Activated naive CD4-positive, alpha-beta T cell treated with anti-CD3 and anti-CD28 coated beads, Interleukin-2, amount 10 ng/mL, durations not matched to agents 7 days and 5 days (primary cell): ENCODE measurements at regions of chr5 and their contacts with region 1.

Region 1: GRCh38 chr5:38441453-38442246 is 114.8 kb downstream of the LIFR start:
- DNase-seq: peak; percentile 89
- H3K4me3 Mint-ChIP-seq: no peak overlapping the region
- H3K27ac Mint-ChIP-seq: no peak overlapping the region
- H3K4me1 Mint-ChIP-seq: no peaks in the 10 kb centered on the region
- H3K27me3 Mint-ChIP-seq: peaks cover 66% of the 10 kb centered on the region

Region 2: DNA sequence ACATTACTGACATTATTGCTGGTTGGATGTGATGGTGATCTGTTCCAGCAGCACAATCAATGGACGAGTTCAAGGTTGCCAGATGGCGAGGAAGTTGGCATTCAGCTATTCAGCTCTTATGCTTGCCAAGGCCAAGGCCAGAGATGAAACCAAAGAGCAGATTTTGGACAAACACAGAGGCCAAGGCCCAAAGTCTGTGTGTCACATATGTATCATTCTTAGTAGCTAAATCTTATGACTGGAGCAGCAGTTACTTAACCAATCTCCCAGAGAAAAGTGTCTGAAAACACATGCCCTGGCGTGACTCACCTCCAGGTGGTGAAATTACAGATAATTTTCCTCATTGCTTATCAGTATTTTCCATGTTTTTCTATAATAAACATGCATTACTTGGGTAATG is 372.3 kb before region 1 on chr5:
- CTCF ChIA-PET with region 1: no interaction called
- DNase-seq: no peak
- H3K4me3 Mint-ChIP-seq: no peak overlapping the region
- H3K27ac Mint-ChIP-seq: no peak overlapping the region
- H3K4me1 Mint-ChIP-seq: no peaks in the 10 kb centered on the region
- H3K27me3 Mint-ChIP-seq: no peaks in the 10 kb centered on the region

Region 3: GRCh38 chr5:38297830-38298608 is 143.6 kb before region 1 on chr5:
- CTCF ChIA-PET with region 1: no interaction called
- DNase-seq: no peak
- H3K4me3 Mint-ChIP-seq: no peak overlapping the region
- H3K27ac Mint-ChIP-seq: no peak overlapping the region
- H3K4me1 Mint-ChIP-seq: no peaks in the 10 kb centered on the region
- H3K27me3 Mint-ChIP-seq: no peaks in the 10 kb centered on the region

Region 4: GRCh38 chr5:38420691-38421390 is 20.8 kb before region 1 on chr5:
- CTCF ChIA-PET with region 1: interaction called, 38 read pairs
- DNase-seq: peak; percentile 65
- H3K4me3 Mint-ChIP-seq: no peak overlapping the region
- H3K27ac Mint-ChIP-seq: no peak overlapping the region
- H3K4me1 Mint-ChIP-seq: no peaks in the 10 kb centered on the region
- H3K27me3 Mint-ChIP-seq: peaks cover 46% of the 10 kb centered on the region

Region 5: DNA sequence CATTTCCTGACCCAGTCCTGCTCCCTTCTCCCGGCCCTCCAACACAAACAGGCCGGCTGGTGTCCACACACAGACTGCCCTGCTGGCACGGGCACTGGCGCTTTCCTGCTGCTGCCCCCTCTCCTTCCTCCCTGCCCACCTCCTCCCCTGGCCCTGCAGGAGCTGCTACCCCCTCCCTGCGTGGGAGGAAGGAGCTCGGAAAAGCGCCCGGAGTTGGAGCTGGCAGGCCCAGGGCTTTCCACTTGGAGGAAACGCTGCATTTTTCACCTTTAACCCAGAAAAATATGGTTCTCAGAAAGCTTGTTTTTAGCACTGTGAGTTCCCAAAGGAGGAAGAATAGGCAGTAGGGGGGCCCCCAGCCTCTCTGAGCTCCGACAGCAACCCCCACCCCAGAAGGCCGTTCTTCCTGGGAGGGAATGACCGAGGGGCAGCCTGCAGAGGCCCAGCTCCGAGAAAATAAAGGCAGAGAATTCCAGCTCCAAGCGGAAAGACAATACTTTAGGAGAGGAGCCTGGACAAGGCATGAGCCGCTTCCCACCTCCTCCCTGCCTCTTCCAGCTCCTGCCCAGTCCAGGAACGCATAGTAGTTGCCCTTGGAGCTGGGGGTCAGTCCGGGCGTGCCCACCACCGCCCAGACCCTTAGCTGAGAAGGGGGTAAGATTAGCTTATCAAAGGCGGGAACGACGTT is 25.8 kb after region 1 on chr5:
- CTCF ChIA-PET with region 1: interaction called, 10 read pairs
- DNase-seq: no peak
- H3K4me3 Mint-ChIP-seq: no peak overlapping the region
- H3K27ac Mint-ChIP-seq: no peak overlapping the region
- H3K4me1 Mint-ChIP-seq: no peaks in the 10 kb centered on the region
- H3K27me3 Mint-ChIP-seq: peaks cover 39% of the 10 kb centered on the region

Region 6: DNA sequence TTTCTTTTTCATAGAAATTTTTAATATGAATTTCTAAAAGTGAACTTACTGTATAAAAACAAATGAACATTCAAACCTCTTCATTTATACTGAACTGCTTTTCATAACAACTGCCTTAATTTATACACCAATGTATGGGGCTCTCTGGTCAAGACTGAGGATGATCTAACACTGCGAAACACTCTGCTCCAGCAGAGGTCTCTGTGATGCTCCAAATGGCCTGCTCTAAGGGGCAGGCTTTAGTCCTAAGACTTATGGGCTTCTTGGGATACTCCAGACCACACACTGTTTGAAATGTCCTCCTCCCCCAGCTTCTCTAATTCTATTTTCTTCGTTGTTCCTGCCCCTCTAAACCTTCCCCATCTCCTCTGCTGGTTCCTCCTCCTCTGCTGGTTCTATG is 56.3 kb after region 1 on chr5:
- CTCF ChIA-PET with region 1: no interaction called
- DNase-seq: no peak
- H3K4me3 Mint-ChIP-seq: no peak overlapping the region
- H3K27ac Mint-ChIP-seq: no peak overlapping the region
- H3K4me1 Mint-ChIP-seq: no peaks in the 10 kb centered on the region
- H3K27me3 Mint-ChIP-seq: peaks cover 17% of the 10 kb centered on the region

Region 7: DNA sequence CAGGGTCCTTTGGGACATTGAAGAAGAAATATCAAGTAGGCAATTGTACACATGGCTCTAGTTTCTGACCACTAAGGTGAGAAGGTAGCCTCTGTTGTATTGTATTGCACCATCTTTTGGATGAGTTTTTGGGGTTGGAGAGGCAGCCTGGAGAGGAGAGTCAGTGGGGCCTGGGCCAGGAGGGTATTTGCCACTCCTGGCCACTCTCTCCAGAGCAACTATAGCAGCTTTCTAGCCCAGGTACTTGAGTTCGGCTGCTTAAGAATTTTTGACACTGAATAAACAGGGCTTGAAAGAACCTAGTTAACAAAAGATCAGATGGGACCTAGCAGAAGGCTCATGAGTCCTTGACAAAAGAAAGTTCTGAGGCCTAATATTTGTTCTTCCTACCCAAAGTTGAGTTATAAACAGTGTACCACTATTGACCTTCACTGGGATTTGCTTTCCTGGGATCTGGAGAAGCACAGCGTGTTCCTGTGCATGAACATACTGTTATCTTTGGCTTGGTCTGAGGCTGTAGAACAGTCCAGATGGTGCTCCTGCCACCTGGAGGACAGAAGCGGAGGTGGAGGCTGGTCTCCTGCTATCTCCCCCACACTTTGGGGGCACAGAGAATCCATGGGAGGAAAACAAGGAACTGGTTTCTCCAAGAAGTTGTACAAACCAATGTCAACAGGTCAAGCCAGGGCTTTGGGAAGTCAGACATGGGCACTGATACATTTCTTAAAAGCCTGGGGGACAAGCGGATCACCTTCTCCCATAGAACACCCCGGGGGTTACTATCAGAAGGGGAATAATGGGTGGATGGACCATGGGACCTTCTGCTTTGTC is 225.2 kb after region 1 on chr5:
- CTCF ChIA-PET with region 1: interaction called, 15 read pairs
- DNase-seq: no peak
- H3K4me3 Mint-ChIP-seq: no peak overlapping the region
- H3K27ac Mint-ChIP-seq: no peak overlapping the region
- H3K4me1 Mint-ChIP-seq: no peaks in the 10 kb centered on the region
- H3K27me3 Mint-ChIP-seq: peaks cover 12% of the 10 kb centered on the region

Region 8: GRCh38 chr5:38809388-38810359 is 368.0 kb after region 1 on chr5:
- CTCF ChIA-PET with region 1: interaction called, 74 read pairs
- DNase-seq: peak; percentile 73
- H3K4me3 Mint-ChIP-seq: no peak overlapping the region
- H3K27ac Mint-ChIP-seq: no peak overlapping the region
- H3K4me1 Mint-ChIP-seq: peaks cover 2% of the 10 kb centered on the region
- H3K27me3 Mint-ChIP-seq: peaks cover 22% of the 10 kb centered on the region

Region 9: GRCh38 chr5:38922199-38922598 is 480.5 kb after region 1 on chr5:
- CTCF ChIA-PET with region 1: interaction called, 16 read pairs
- DNase-seq: peak; percentile 65
- H3K4me3 Mint-ChIP-seq: no peak overlapping the region
- H3K27ac Mint-ChIP-seq: no peak overlapping the region
- H3K4me1 Mint-ChIP-seq: no peaks in the 10 kb centered on the region
- H3K27me3 Mint-ChIP-seq: peaks cover 57% of the 10 kb centered on the region